ENCODE measurements at regions of chr9 and their contacts with region 1.

Region 1: GRCh38 chr9:7622481-7622880 is 177.1 kb downstream of the DMAC1 start:
- DNase-seq: no peak
- H3K4me3 ChIP-seq: no peak overlapping the region
- H3K27ac ChIP-seq: no peak overlapping the region
- H3K4me1 ChIP-seq: no peaks in the 10 kb centered on the region
- H3K27me3 ChIP-seq: no peaks in the 10 kb centered on the region
- CTCF ChIP-seq: no peak
- EP300 ChIP-seq: no peak
- POLR2A ChIP-seq: no peak

Region 2: GRCh38 chr9:7452378-7452777 is 170.1 kb before region 1 on chr9:
- in situ Hi-C with region 1: no loop called
- intact Hi-C with region 1: no loop called
- DNase-seq: no peak
- H3K4me3 ChIP-seq: no peak overlapping the region
- H3K27ac ChIP-seq: no peak overlapping the region
- H3K4me1 ChIP-seq: peaks cover 0 to 27% (median 8%) of the 10 kb centered on the region in 4 donors
- H3K27me3 ChIP-seq: no peaks in the 10 kb centered on the region
- CTCF ChIP-seq: no peak
- EP300 ChIP-seq: no peak
- POLR2A ChIP-seq: no peak

Region 3: DNA sequence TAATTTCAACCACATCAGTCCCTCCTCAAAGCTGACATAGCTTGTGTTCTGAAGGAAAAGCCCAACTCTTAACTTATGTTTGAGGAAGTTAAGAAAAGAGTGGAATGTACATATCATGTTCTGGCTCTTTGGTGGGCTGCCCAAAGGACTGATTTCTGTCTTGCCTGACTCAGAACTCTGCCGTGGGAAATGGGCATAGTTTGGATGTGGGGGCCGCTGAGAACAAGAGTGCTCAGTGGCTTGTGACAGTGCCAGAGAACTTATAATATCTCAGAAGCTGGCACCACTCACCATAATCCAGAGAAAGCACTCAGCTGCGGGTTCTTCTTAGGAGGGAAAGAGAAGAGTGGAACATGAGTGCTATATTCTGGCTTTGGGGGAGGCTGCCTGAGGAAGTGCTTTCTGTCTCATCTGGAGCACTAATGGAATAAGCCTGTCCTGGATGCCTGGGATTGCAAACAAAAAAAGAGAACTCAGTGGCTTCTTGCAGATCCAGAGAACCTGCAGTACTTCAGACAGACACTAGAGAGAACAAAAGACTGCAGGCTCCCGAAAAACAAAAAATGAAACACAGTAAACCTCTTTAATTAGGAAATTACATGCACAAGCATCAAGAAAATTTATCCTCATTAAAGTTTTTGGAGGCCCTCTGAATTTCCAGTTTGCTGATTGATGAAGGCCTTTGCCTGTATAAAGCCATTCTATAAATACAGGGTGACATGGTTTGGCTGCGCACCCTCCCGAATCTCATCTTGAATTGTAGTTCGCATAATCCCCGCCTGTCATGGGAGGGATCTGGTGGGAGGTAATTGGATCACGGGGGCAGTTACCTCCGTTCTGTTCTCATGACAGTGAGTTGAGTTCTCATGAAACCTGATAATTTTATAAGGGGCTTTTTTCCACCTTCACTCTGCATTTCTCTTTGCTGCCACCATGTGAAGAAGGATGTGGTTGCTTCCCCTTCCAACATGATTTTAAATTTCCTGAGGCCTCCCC is 29.9 kb before region 1 on chr9:
- in situ Hi-C with region 1: no loop called
- intact Hi-C with region 1: loop called (anchors 1 kb)
- DNase-seq: no peak
- H3K4me3 ChIP-seq: no peak overlapping the region
- H3K27ac ChIP-seq: no peak overlapping the region
- H3K4me1 ChIP-seq: no peaks in the 10 kb centered on the region
- H3K27me3 ChIP-seq: no peaks in the 10 kb centered on the region
- CTCF ChIP-seq: peak in 2 of 5 experiments; percentile 18 to 22
- EP300 ChIP-seq: no peak
- POLR2A ChIP-seq: no peak

Region 4: DNA sequence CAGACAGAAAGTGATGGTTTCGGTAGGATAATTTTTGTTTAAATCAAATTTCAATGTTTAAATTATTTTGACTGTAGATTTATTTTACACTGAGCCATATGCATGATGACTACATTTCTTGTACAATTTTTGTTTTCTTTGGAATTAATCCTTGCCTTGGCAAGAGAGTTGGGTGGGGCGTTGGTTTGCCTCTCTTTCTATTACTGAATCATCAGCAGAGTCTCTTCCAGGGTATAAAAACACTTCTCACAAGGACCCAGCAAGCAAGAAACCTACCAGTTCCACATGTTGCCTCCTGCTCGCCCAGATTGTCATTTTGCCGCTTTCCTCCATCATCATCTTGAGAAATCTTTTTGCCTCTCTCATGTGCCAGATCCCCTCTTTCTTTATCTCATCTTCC is 632.1 kb after region 1 on chr9:
- in situ Hi-C with region 1: no loop called
- intact Hi-C with region 1: no loop called
- DNase-seq: no peak
- H3K4me3 ChIP-seq: no peak overlapping the region
- H3K27ac ChIP-seq: no peak overlapping the region
- H3K4me1 ChIP-seq: no peaks in the 10 kb centered on the region
- H3K27me3 ChIP-seq: no peaks in the 10 kb centered on the region
- CTCF ChIP-seq: no peak
- EP300 ChIP-seq: no peak
- POLR2A ChIP-seq: no peak